ENCODE measurements at regions of chr4 and their contacts with region 1.

Region 1: GRCh38 chr4:159102622-159103383 is at the start of gene RAPGEF2:
- DNase-seq: peak; percentile 89 to 94
- ATAC-seq: peak; percentile 93 to 96 (median 94)
- H3K4me3 ChIP-seq: peak within 1 kb of the TSS; percentile 99
- H3K27ac ChIP-seq: peak within 1 kb of the TSS; percentile 97
- H3K4me1 ChIP-seq: peaks cover 28% of the 10 kb centered on the region
- H3K27me3 ChIP-seq: no peaks in the 10 kb centered on the region
- CTCF ChIP-seq: no peak
- total RNA-seq, gene RAPGEF2: 20.4 to 35.2 (median 22.3) TPM

Region 2: GRCh38 chr4:159142241-159142640 is 39.4 kb after region 1 on chr4:
- intact Hi-C with region 1: loop called in 1 of 2 experiments (anchors 5 kb)
- DNase-seq: no peak
- ATAC-seq: peak; percentile 60 to 81 (median 72)
- H3K4me3 ChIP-seq: no peak overlapping the region
- H3K27ac ChIP-seq: peak overlapping the region; percentile 46
- H3K4me1 ChIP-seq: peaks cover 86% of the 10 kb centered on the region
- H3K27me3 ChIP-seq: no peaks in the 10 kb centered on the region
- CTCF ChIP-seq: no peak

Region 3: GRCh38 chr4:159169404-159170302 is 66.8 kb after region 1 on chr4:
- intact Hi-C with region 1: loop called (anchors 5 kb)
- DNase-seq: no peak
- ATAC-seq: no peak
- H3K4me3 ChIP-seq: no peak overlapping the region
- H3K27ac ChIP-seq: no peak overlapping the region
- H3K4me1 ChIP-seq: peaks cover 35% of the 10 kb centered on the region
- H3K27me3 ChIP-seq: no peaks in the 10 kb centered on the region
- CTCF ChIP-seq: no peak

Measured in psoas muscle (tissue), 8 donors.